ENCODE measurements at regions of chr1 and their contacts with region 1.

Region 1: DNA sequence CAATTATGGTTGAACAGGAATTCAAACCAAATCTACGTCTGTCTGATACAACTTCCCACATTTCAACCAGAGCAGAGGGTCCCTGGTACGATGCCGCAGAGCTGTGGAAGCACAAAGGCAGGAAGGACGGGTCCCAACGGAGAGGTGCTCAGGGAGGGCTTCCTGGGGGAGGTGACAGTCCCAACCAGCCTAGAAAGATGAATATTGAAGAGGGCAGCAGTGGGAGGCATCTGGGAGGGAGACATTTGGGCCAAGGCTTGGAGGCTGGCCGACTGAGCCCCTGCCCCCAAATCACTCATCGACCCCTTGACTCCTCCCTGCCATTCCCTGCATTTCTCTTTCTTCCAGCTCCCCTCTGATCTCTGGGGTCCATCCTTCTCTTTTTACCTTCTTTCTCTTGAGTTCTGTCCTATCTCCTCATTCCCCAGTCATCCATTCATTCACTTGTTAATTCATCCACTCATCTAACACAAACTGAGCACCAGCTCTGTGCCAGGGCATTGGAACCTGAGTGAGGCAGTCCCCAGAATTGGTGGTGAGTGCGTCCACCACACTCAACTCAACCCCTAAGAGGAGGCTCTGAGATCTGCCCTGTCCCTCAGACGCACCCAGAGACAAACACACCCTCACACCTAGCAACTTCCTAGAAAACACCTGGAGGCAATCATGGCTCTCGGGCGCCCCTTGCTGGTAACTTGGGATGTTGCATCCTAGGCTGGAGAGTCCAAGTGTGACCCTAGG is 13.2 kb upstream of the CELA3B start:
- DNase-seq: peak in 1 of 2 donors; percentile 89
- H3K4me3 ChIP-seq: no peak overlapping the region
- H3K27ac ChIP-seq: no peak overlapping the region
- H3K4me1 ChIP-seq: no peaks in the 10 kb centered on the region
- H3K27me3 ChIP-seq: no peaks in the 10 kb centered on the region
- CTCF ChIP-seq: peak; percentile 89 to 95 (median 92)

Region 2: DNA sequence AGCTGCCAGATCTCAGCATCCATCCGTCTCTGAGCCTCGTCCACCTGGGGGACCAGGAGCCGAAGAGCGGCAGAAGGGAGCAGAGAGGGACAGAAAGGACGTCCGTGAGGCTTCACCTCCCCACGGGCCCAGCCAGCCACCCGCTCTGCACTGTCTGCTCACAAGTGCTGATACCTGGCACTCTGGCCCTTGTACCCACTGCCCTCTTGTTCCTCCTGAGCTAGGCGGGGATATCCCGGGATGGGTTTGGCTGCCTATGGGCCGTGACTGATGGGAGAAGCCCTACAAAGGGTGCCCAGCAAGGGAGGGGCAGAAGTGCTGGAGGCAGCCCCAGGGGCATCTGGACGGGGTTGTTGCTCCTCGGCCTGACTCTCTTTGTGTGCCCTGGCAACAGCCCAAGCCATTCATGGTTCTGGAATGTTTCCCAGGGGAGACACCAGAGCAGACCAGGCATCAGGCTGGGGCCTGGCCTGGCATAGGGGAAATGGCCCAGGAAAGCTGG is 94.0 kb before region 1 on chr1:
- intact Hi-C with region 1: loop called (anchors 2 kb)
- DNase-seq: peak; percentile 70 to 97
- H3K4me3 ChIP-seq: no peak overlapping the region
- H3K27ac ChIP-seq: peak overlapping the region; percentile 76 to 83
- H3K4me1 ChIP-seq: peaks cover 17% of the 10 kb centered on the region in 2 donors
- H3K27me3 ChIP-seq: no peaks in the 10 kb centered on the region
- CTCF ChIP-seq: no peak